ENCODE measurements at regions of chr6 and their contacts with region 1.

Region 1: GRCh38 chr6:112043032-112044007 is 10.6 kb upstream of the CCN6 start:
- DNase-seq: peak; percentile 89
- H3K4me3 ChIP-seq: peak overlapping the region; percentile 47 to 73 (median 52)
- H3K27ac ChIP-seq: peak overlapping the region; percentile 81 to 90 (median 84)
- H3K4me1 ChIP-seq: peaks cover 2 to 13% (median 9%) of the 10 kb centered on the region in 4 donors
- H3K27me3 ChIP-seq: no peaks in the 10 kb centered on the region
- CTCF ChIP-seq: peak; percentile 87 to 96 (median 94)
- EP300 ChIP-seq: no peak
- POLR2A ChIP-seq: peak; percentile 20

Region 2: GRCh38 chr6:111259089-111259831 is 784.1 kb before region 1 on chr6:
- in situ Hi-C with region 1: loop called in 1 of 4 experiments (anchors 25 kb)
- intact Hi-C with region 1: no loop called
- DNase-seq: peak; percentile 99
- H3K4me3 ChIP-seq: peak overlapping the region; percentile 57 to 87 (median 68)
- H3K27ac ChIP-seq: peak overlapping the region; percentile 95 to 96 (median 96)
- H3K4me1 ChIP-seq: peaks cover 9 to 26% (median 13%) of the 10 kb centered on the region in 4 donors
- H3K27me3 ChIP-seq: no peaks in the 10 kb centered on the region
- CTCF ChIP-seq: peak; percentile 90 to 99 (median 94)
- EP300 ChIP-seq: no peak
- POLR2A ChIP-seq: peak; percentile 72

Region 3: DNA sequence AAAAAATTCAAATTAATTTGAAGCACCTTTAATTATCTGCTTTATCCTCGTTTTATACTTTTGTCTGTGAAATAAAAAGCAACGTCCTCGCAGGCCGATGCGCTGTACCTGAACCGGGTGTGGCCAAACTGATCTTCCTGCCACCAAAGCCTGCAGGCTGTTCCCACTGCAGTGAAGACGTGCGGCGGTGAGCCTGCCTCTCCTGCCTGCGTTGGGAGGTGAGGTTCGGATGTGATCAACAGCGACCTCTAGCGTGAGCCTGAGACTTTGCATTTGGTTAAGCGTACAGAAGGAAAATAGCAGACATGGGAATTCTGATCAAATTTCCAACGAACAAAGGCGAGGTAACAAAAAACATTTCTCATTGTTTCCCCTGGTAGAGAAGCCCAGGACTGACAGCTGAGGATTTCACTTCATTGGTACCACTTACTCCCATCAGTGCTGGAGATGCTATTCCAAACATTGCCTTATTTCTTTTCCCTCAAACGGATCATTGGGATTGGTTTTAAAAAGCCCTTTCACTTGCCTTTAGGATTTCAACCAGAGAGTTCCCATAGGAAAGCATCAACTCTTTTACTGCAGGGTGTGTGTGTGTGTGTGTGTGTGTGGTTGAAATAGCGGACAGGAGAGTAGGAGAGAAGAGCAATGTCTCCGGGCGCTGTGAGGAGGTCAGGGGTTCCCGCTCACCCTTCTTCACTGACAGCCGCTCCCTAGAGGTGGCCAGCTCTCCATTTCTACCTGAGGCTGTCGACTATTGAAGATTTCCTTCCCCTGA is 46.1 kb before region 1 on chr6:
- in situ Hi-C with region 1: no loop called
- intact Hi-C with region 1: loop called (anchors 5 kb)
- DNase-seq: peak; percentile 80
- H3K4me3 ChIP-seq: no peak overlapping the region
- H3K27ac ChIP-seq: peak overlapping the region in 1 of 4 donors; percentile 15
- H3K4me1 ChIP-seq: peaks cover 0 to 8% (median 0%) of the 10 kb centered on the region in 4 donors
- H3K27me3 ChIP-seq: no peaks in the 10 kb centered on the region
- CTCF ChIP-seq: peak; percentile 82 to 93 (median 88)
- EP300 ChIP-seq: no peak
- POLR2A ChIP-seq: no peak